ENCODE measurements at regions of chr2 and their contacts with region 1.

Region 1: DNA sequence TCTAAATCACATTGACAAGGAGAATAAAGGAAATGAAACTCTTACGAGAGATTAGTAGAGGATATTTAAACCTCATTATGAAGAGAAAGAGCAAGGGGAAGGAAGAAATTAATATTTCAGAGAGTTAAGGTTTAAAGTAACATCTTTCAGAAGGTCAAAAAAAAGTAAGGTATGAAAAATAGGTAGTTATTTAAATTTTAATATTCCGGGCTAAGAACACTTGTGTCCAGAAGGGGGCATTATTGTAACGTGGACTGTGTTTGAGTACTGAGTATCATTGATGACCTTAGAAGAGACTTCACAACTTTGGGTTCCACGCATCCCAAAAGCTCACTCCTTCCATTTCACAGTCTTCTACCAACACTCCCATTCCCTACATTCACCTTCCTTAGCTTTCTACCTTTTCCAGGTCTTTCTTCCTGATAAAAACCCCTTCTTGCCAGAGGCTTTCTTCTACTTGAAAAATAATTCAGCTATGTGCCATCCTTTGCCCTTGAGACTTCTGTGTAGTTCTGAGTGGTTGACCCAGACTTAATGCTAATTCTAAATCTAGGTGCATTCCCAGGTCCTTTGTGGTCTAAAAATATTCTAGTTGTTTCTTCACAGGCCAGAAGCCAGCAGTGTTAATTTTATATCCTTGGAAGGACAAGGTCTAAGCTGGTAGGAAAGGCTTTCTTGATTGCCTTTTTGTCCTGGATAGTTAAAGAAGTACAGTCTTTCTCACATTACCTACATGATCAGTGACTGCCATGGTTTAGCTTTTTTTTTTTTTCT is 16.5 kb downstream of the DYNC1I2 start:
- DNase-seq: peak; percentile 59
- H3K4me3 ChIP-seq: no peak overlapping the region
- H3K27ac ChIP-seq: no peak overlapping the region
- H3K4me1 ChIP-seq: peaks cover 4% of the 10 kb centered on the region
- H3K27me3 ChIP-seq: no peaks in the 10 kb centered on the region
- CTCF ChIP-seq: peak; percentile 19 to 39
- POLR2A ChIP-seq: no peak

Region 2: DNA sequence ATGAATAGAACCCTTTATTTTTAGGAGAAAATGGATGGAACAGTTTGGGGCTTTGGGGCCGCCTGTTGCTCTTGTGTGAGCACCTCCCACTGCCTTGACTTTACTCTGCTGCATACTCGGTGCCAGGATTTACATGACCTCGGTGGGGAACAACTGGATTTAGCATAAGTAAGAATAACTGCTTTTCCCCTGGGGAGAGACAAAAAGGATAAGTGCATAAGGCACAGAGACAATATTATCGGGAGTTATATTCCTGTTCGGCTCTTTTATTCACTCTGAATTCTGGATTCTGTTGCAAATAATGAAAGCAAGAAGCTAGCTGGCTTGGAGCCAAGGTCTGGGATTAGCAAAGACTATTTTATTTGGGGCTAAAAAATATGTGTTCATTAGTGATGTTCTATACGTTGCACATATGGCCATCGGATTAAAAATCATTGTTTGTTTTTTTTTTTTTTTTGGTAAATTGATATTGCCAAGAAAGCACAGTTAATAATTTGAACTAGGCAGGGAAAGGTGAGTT is 111.7 kb before region 1 on chr2:
- CTCF ChIA-PET with region 1: no interaction called
- POLR2A ChIA-PET with region 1: no interaction called
- dilution Hi-C with region 1: no loop called
- intact Hi-C with region 1: no loop called
- DNase-seq: no peak
- H3K4me3 ChIP-seq: no peak overlapping the region
- H3K27ac ChIP-seq: no peak overlapping the region
- H3K4me1 ChIP-seq: no peaks in the 10 kb centered on the region
- H3K27me3 ChIP-seq: peaks cover 5 to 13% of the 10 kb centered on the region in 2 experiments
- CTCF ChIP-seq: no peak
- POLR2A ChIP-seq: no peak

Region 3: GRCh38 chr2:171718720-171719119 is 15.0 kb after region 1 on chr2:
- CTCF ChIA-PET with region 1: interaction called, 40 read pairs
- POLR2A ChIA-PET with region 1: no interaction called
- dilution Hi-C with region 1: no loop called
- intact Hi-C with region 1: no loop called
- DNase-seq: no peak
- H3K4me3 ChIP-seq: no peak overlapping the region
- H3K27ac ChIP-seq: no peak overlapping the region
- H3K4me1 ChIP-seq: peaks cover 2% of the 10 kb centered on the region
- H3K27me3 ChIP-seq: no peaks in the 10 kb centered on the region
- CTCF ChIP-seq: no peak
- POLR2A ChIP-seq: no peak

Region 4: DNA sequence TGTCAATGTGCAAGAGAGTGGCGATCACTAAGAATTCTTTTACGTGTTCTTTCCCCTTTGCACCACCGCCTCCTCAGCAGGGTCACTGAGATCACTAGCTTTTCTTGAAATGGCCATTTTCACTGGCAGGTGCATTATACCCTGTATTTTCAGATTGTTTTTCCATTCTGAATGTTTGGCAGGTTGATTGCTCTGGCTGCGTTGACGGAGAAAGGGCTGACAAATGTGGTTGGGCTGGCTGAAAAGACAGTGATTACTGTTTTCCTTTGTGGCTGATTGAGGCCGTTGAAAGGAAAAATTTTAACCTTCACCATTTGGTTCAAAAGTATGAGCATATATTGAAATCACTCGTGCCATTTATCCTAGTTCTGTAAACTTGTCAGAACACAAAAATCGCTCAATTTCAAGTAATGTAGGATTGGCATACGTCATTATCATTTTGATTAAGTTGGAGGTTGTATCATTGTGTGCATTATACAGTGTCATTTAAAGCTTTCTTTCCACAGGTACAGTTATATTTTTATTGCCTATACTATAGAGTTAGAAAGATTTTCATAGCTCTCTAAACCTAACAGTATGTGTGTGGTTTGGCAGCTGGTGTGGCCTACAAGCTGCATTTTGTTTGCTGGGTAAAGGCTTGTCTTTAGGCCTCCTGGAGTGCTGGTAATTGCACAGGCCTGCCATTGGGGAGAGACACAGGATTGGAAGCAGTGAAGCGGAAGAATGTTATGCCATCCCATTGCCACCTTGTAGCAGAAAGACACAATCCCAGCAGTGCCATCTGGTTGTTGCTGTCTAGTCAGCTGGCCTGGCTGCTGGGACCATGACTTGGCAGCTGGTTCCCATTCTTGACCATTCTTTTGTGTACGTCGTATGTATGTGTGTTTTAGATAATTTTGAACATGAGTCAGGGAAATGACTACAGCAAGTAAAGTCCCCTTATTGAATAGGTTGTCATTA is 20.2 kb after region 1 on chr2:
- CTCF ChIA-PET with region 1: interaction called, 40 read pairs
- POLR2A ChIA-PET with region 1: no interaction called
- dilution Hi-C with region 1: no loop called
- intact Hi-C with region 1: no loop called
- DNase-seq: peak; percentile 17
- H3K4me3 ChIP-seq: no peak overlapping the region
- H3K27ac ChIP-seq: no peak overlapping the region
- H3K4me1 ChIP-seq: no peaks in the 10 kb centered on the region
- H3K27me3 ChIP-seq: no peaks in the 10 kb centered on the region
- CTCF ChIP-seq: no peak
- POLR2A ChIP-seq: no peak

Region 5: GRCh38 chr2:171745141-171745540 is 41.4 kb after region 1 on chr2:
- CTCF ChIA-PET with region 1: interaction called, 10 read pairs
- POLR2A ChIA-PET with region 1: no interaction called
- dilution Hi-C with region 1: no loop called
- intact Hi-C with region 1: no loop called
- DNase-seq: no peak
- H3K4me3 ChIP-seq: no peak overlapping the region
- H3K27ac ChIP-seq: no peak overlapping the region
- H3K4me1 ChIP-seq: no peaks in the 10 kb centered on the region
- H3K27me3 ChIP-seq: no peaks in the 10 kb centered on the region
- CTCF ChIP-seq: no peak
- POLR2A ChIP-seq: no peak

Region 6: DNA sequence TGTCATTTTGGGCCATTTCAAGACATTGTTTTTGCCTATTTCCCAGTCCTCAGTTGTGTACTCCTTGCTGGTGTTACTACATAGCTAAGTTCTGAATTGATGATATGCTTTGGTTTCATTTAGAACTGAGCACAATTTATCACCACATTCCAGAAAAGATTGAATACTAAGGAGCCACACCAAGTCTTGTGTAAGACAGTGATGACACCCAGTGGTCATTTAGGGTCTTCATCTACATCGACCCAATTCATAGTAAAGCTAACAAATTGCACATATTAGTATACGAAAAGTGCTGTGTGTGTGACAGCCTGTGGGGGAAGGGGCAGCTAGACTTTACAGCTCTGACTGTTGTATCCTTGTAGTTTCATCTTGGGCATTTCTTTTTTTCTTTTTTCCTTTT is 409.9 kb after region 1 on chr2:
- CTCF ChIA-PET with region 1: interaction called, 193 read pairs
- POLR2A ChIA-PET with region 1: no interaction called
- dilution Hi-C with region 1: no loop called
- intact Hi-C with region 1: no loop called
- DNase-seq: peak; percentile 42
- H3K4me3 ChIP-seq: no peak overlapping the region
- H3K27ac ChIP-seq: no peak overlapping the region
- H3K4me1 ChIP-seq: peaks cover under 1% of the 10 kb centered on the region
- H3K27me3 ChIP-seq: no peaks in the 10 kb centered on the region
- CTCF ChIP-seq: no peak
- POLR2A ChIP-seq: no peak